Heart right ventricle (tissue), 16 donors: ENCODE measurements at regions of chr19 and their contacts with region 1.

Region 1: GRCh38 chr19:41641879-41642485 is 15.1 kb upstream of the CEACAM4 start:
- DNase-seq: peak in 1 of 2 donors; percentile 44
- ATAC-seq: peak in 5 of 8 donors; percentile 51 to 67 (median 58)
- H3K4me3 ChIP-seq: no peak overlapping the region
- H3K27ac ChIP-seq: no peak overlapping the region
- H3K4me1 ChIP-seq: peaks cover 0 to 20% (median 0%) of the 10 kb centered on the region in 9 donors
- H3K27me3 ChIP-seq: peaks cover 0 to 63% (median 36%) of the 10 kb centered on the region in 7 donors
- CTCF ChIP-seq: peak; percentile 66 to 89 (median 81)

Region 2: GRCh38 chr19:41734617-41735016 is 92.6 kb after region 1 on chr19:
- intact Hi-C with region 1: loop called in 1 of 10 experiments (anchors 5 kb)
- DNase-seq: no peak
- ATAC-seq: no peak
- H3K4me3 ChIP-seq: no peak overlapping the region
- H3K27ac ChIP-seq: no peak overlapping the region
- H3K4me1 ChIP-seq: no peaks in the 10 kb centered on the region
- H3K27me3 ChIP-seq: peaks cover 0 to 76% (median 44%) of the 10 kb centered on the region in 7 donors
- CTCF ChIP-seq: no peak

Region 3: GRCh38 chr19:41746593-41747227 is 104.7 kb after region 1 on chr19:
- intact Hi-C with region 1: loop called in 7 of 10 experiments (anchors 2 to 10 kb)
- DNase-seq: peak in 1 of 2 donors; percentile 7
- ATAC-seq: peak in 3 of 8 donors; percentile 62 to 73 (median 62)
- H3K4me3 ChIP-seq: no peak overlapping the region
- H3K27ac ChIP-seq: no peak overlapping the region
- H3K4me1 ChIP-seq: peaks cover 0 to 17% (median 0%) of the 10 kb centered on the region in 9 donors
- H3K27me3 ChIP-seq: peaks cover 0 to 71% (median 33%) of the 10 kb centered on the region in 7 donors
- CTCF ChIP-seq: peak in 7 of 9 donors; percentile 5 to 57 (median 49)

Region 4: GRCh38 chr19:41753936-41754529 is 112.1 kb after region 1 on chr19:
- intact Hi-C with region 1: loop called in 4 of 10 experiments (anchors 5 to 10 kb)
- DNase-seq: peak; percentile 12 to 20
- ATAC-seq: peak in 6 of 8 donors; percentile 42 to 76 (median 58)
- H3K4me3 ChIP-seq: no peak overlapping the region
- H3K27ac ChIP-seq: no peak overlapping the region
- H3K4me1 ChIP-seq: peaks cover 0 to 11% (median 0%) of the 10 kb centered on the region in 9 donors
- H3K27me3 ChIP-seq: peaks cover 0 to 57% (median 11%) of the 10 kb centered on the region in 7 donors
- CTCF ChIP-seq: peak; percentile 23 to 76 (median 61)

Region 5: DNA sequence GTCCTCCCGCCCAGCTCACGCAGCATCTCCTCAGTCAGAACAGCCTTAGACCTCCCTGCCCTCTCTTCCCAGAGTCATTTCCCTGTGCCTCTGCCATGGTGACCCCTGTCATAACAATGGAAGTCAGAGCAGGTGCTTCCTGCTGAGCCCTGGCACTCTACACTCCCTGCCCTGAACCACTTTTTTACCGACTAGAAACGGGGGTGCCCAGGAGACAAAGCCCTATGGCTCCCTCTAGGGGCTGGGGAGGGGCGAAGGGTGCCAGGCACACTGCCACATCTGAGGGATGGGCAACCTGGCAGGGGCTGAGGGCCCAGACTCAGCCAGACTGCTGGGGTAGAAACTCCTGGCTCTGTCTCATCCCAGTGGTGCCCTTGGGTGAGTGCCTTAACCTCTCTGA is 450.4 kb after region 1 on chr19:
- intact Hi-C with region 1: no loop called
- DNase-seq: no peak
- ATAC-seq: peak in 6 of 8 donors; percentile 27 to 68 (median 48)
- H3K4me3 ChIP-seq: no peak overlapping the region
- H3K27ac ChIP-seq: no peak overlapping the region
- H3K4me1 ChIP-seq: peaks cover 0 to 33% (median 4%) of the 10 kb centered on the region in 9 donors
- H3K27me3 ChIP-seq: peaks cover 0 to 25% (median 19%) of the 10 kb centered on the region in 7 donors
- CTCF ChIP-seq: peak in 8 of 9 donors; percentile 14 to 61 (median 50)